ENCODE measurements at regions of chr1 and their contacts with region 1.

Region 1: GRCh38 chr1:51014878-51015277 is 44.8 kb downstream of the CDKN2C start:
- DNase-seq: no peak
- ATAC-seq: no peak
- H3K4me3 ChIP-seq: no peak overlapping the region
- H3K27ac ChIP-seq: no peak overlapping the region
- H3K4me1 ChIP-seq: no peaks in the 10 kb centered on the region
- H3K27me3 ChIP-seq: no peaks in the 10 kb centered on the region
- CTCF ChIP-seq: no peak

Region 2: GRCh38 chr1:50873458-50874187 is 141.3 kb before region 1 on chr1:
- intact Hi-C with region 1: no loop called
- DNase-seq: peak in 1 of 2 donors; percentile 35
- ATAC-seq: peak in 3 of 4 donors; percentile 51 to 52 (median 52)
- H3K4me3 ChIP-seq: no peak overlapping the region
- H3K27ac ChIP-seq: no peak overlapping the region
- H3K4me1 ChIP-seq: peaks cover 6% of the 10 kb centered on the region
- H3K27me3 ChIP-seq: no peaks in the 10 kb centered on the region
- CTCF ChIP-seq: peak; percentile 40

Region 3: DNA sequence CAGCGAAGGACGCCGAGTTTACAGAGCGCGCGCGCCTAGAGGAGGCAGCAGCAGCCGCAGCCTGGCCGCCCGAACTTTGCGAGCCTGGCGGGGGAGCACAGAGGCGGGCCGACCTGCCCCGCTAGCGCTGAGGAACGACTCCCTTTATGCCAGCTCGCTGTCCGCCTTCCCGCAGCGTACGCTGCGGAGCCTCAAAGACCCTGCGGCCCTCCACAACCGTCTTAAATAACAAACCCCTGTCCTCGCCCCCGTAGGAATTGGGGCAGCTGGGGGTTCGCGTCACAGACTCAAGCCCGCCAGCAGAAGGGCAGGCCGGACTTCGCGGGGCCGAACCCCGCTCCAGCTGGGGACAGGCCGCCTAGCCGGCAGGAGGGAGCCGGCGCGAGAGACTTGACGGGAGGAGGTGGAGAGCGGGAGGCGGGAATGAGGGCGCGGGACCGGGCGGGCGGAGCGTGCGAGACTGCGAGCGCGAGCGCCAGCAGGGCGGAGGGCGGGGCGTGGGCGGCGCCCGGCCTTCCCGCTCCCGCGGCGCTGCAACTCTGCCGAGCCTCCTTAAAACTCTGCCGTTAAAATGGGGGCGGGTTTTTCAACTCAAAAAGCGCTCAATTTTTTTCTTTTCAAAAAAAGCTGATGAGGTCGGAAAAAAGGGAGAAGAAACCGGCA is 46.6 kb before region 1 on chr1:
- intact Hi-C with region 1: no loop called
- DNase-seq: peak; percentile 91 to 94
- ATAC-seq: peak; percentile 90 to 93 (median 90)
- H3K4me3 ChIP-seq: peak overlapping the region; percentile 89
- H3K27ac ChIP-seq: peak overlapping the region; percentile 99
- H3K4me1 ChIP-seq: peaks cover 14% of the 10 kb centered on the region
- H3K27me3 ChIP-seq: no peaks in the 10 kb centered on the region
- CTCF ChIP-seq: peak; percentile 43

Region 4: DNA sequence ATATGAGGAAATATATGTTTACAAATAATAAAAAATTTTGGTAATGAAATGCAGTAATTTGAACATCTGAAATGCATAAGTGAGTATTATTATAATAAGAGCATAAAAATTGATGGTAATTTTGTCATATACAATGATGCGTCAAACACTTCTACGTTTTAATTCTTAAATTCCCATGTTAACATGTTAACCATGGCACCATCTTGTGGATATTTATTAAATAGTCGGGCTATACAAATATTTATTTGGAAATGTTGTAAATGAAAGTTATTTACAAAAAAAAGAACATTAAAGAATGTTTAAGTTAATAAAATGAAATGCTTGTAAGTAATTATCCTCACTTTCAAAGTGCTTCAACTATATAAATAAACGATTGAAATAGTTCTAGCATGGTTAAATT is 30.0 kb after region 1 on chr1:
- intact Hi-C with region 1: no loop called
- DNase-seq: no peak
- ATAC-seq: peak in 1 of 4 donors; percentile 74
- H3K4me3 ChIP-seq: no peak overlapping the region
- H3K27ac ChIP-seq: no peak overlapping the region
- H3K4me1 ChIP-seq: no peaks in the 10 kb centered on the region
- H3K27me3 ChIP-seq: no peaks in the 10 kb centered on the region
- CTCF ChIP-seq: peak; percentile 55

Region 5: GRCh38 chr1:51093581-51093980 is 78.7 kb after region 1 on chr1:
- intact Hi-C with region 1: no loop called
- DNase-seq: no peak
- ATAC-seq: no peak
- H3K4me3 ChIP-seq: no peak overlapping the region
- H3K27ac ChIP-seq: no peak overlapping the region
- H3K4me1 ChIP-seq: no peaks in the 10 kb centered on the region
- H3K27me3 ChIP-seq: no peaks in the 10 kb centered on the region
- CTCF ChIP-seq: no peak

Region 6: GRCh38 chr1:51168266-51168845 is 153.5 kb after region 1 on chr1:
- intact Hi-C with region 1: loop called in 1 of 2 experiments (anchors 5 kb)
- DNase-seq: no peak
- ATAC-seq: no peak
- H3K4me3 ChIP-seq: no peak overlapping the region
- H3K27ac ChIP-seq: no peak overlapping the region
- H3K4me1 ChIP-seq: no peaks in the 10 kb centered on the region
- H3K27me3 ChIP-seq: no peaks in the 10 kb centered on the region
- CTCF ChIP-seq: no peak

Measured in psoas muscle (tissue), 8 donors.